GM12878 (cell line): ENCODE measurements at regions of chr6 and their contacts with region 1.

Region 1: GRCh38 chr6:111259089-111259831 is 172.0 kb downstream of the SLC16A10 start:
- DNase-seq: peak; percentile 99
- ATAC-seq: peak; percentile 97
- H3K4me3 ChIP-seq: peak overlapping the region; percentile 72
- H3K27ac ChIP-seq: peak overlapping the region; percentile 90
- H3K4me1 ChIP-seq: no peaks in the 10 kb centered on the region
- H3K27me3 ChIP-seq: no peaks in the 10 kb centered on the region
- CTCF ChIP-seq: peak; percentile 95 to 99 (median 97); a peak in 5 of 6 replicates
- EP300 ChIP-seq: peak in 1 of 2 experiments; percentile 88; a peak in 2 of 4 replicates
- POLR2A ChIP-seq: peak; percentile 95
- RAD21 ChIP-seq: peak; percentile 93

Region 2: GRCh38 chr6:111175109-111175508 is 84.2 kb before region 1 on chr6:
- CTCF ChIA-PET with region 1: no interaction called
- POLR2A ChIA-PET with region 1: no interaction called
- RAD21 ChIA-PET with region 1: no interaction called
- SMC1A ChIA-PET with region 1: no interaction called
- in situ Hi-C with region 1: no loop called
- intact Hi-C with region 1: no loop called
- DNase-seq: no peak
- ATAC-seq: no peak
- H3K4me3 ChIP-seq: no peak overlapping the region
- H3K27ac ChIP-seq: no peak overlapping the region
- H3K4me1 ChIP-seq: peaks cover 23% of the 10 kb centered on the region
- H3K27me3 ChIP-seq: no peaks in the 10 kb centered on the region
- CTCF ChIP-seq: no peak
- EP300 ChIP-seq: no peak
- POLR2A ChIP-seq: no peak
- RAD21 ChIP-seq: no peak

Region 3: DNA sequence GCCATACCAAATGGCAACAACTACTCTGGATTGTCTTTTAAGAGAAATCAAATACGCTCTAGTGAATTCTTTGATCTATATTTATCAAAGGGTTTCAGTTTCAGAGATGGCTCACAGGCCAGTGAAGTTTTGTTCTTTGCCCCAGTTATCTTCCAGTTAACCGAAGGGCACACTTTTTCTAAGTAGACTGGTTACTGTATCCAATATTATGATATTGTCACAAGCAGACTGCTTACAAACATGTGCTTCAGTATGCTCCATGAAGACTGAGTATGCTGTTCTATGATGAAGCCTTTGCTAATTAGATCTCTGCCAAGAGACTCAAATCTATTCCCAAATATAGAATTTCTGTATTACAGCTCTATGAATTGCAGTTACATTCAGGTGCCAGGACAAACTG is 42.7 kb after region 1 on chr6:
- CTCF ChIA-PET with region 1: interaction called, 9 read pairs
- POLR2A ChIA-PET with region 1: interaction called, 3 read pairs
- RAD21 ChIA-PET with region 1: interaction called, 11 read pairs
- SMC1A ChIA-PET with region 1: interaction called, 13 read pairs
- in situ Hi-C with region 1: no loop called
- intact Hi-C with region 1: loop called (anchors 2 kb)
- DNase-seq: no peak
- ATAC-seq: peak; percentile 86
- H3K4me3 ChIP-seq: no peak overlapping the region
- H3K27ac ChIP-seq: peak overlapping the region; percentile 35; the same call in 1 of the 2 replicates
- H3K4me1 ChIP-seq: peaks cover 15% of the 10 kb centered on the region
- H3K27me3 ChIP-seq: no peaks in the 10 kb centered on the region
- CTCF ChIP-seq: no peak
- EP300 ChIP-seq: no peak
- POLR2A ChIP-seq: no peak
- RAD21 ChIP-seq: no peak

Region 4: GRCh38 chr6:111382476-111383300 is 123.4 kb after region 1 on chr6:
- CTCF ChIA-PET with region 1: interaction called, 14 read pairs
- POLR2A ChIA-PET with region 1: interaction called, 3 read pairs
- RAD21 ChIA-PET with region 1: interaction called, 16 read pairs
- SMC1A ChIA-PET with region 1: interaction called, 3 read pairs
- in situ Hi-C with region 1: no loop called
- intact Hi-C with region 1: no loop called
- DNase-seq: no peak
- ATAC-seq: no peak
- H3K4me3 ChIP-seq: no peak overlapping the region
- H3K27ac ChIP-seq: no peak overlapping the region
- H3K4me1 ChIP-seq: 0 out of 2 replicates have a peak, but pooled peaks cover 3% of the 10 kb centered on the region
- H3K27me3 ChIP-seq: no peaks in the 10 kb centered on the region
- CTCF ChIP-seq: no peak
- EP300 ChIP-seq: no peak
- POLR2A ChIP-seq: no peak
- RAD21 ChIP-seq: no peak

Region 5: GRCh38 chr6:111432511-111432910 is 173.3 kb after region 1 on chr6:
- CTCF ChIA-PET with region 1: no interaction called
- POLR2A ChIA-PET with region 1: no interaction called
- RAD21 ChIA-PET with region 1: no interaction called
- SMC1A ChIA-PET with region 1: no interaction called
- in situ Hi-C with region 1: no loop called
- intact Hi-C with region 1: no loop called
- DNase-seq: no peak
- ATAC-seq: no peak
- H3K4me3 ChIP-seq: no peak overlapping the region
- H3K27ac ChIP-seq: no peak overlapping the region
- H3K4me1 ChIP-seq: peaks cover 13% of the 10 kb centered on the region
- H3K27me3 ChIP-seq: no peaks in the 10 kb centered on the region
- CTCF ChIP-seq: no peak
- EP300 ChIP-seq: no peak
- POLR2A ChIP-seq: no peak
- RAD21 ChIP-seq: no peak

Region 6: DNA sequence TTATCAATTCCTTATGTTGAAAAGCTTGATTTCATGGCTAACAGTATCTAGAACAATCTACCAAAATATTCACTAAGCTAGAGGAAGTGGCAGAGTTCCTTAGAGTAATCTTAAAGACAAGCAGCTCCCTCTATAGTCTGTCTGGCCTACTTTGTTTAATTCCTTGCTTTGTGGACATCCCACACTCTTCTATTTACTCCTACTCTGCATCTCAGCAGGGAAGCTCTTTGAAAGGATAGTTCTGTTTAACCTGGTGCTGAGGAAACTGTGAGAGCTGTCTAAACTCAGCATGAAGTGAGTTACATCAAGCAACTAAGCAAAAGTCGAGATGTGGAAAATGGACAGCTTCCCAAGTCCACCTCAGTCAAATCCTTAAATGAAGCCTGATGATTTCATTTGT is 219.5 kb after region 1 on chr6:
- CTCF ChIA-PET with region 1: interaction called, 215 read pairs
- POLR2A ChIA-PET with region 1: interaction called, 52 read pairs
- RAD21 ChIA-PET with region 1: interaction called, 263 read pairs
- SMC1A ChIA-PET with region 1: interaction called, 153 read pairs
- in situ Hi-C with region 1: loop called (anchors 5 kb)
- intact Hi-C with region 1: loop called (anchors 1 kb)
- DNase-seq: peak; percentile 49
- ATAC-seq: peak; percentile 60
- H3K4me3 ChIP-seq: 0 out of 2 replicates have a peak overlapping the region, but pooled peaks have one; percentile 0
- H3K27ac ChIP-seq: peak overlapping the region; percentile 5
- H3K4me1 ChIP-seq: peaks cover 12% of the 10 kb centered on the region; the same call in 1 of the 2 replicates
- H3K27me3 ChIP-seq: no peaks in the 10 kb centered on the region
- CTCF ChIP-seq: peak; percentile 33 to 71 (median 63); a peak in 4 of 6 replicates
- EP300 ChIP-seq: no peak
- POLR2A ChIP-seq: no peak
- RAD21 ChIP-seq: peak; percentile 70

Region 7: GRCh38 chr6:111573131-111573883 is 314.0 kb after region 1 on chr6:
- CTCF ChIA-PET with region 1: interaction called, 11 read pairs
- POLR2A ChIA-PET with region 1: no interaction called
- RAD21 ChIA-PET with region 1: interaction called, 5 read pairs
- SMC1A ChIA-PET with region 1: interaction called, 8 read pairs
- in situ Hi-C with region 1: no loop called
- intact Hi-C with region 1: no loop called
- DNase-seq: no peak
- ATAC-seq: no peak
- H3K4me3 ChIP-seq: no peak overlapping the region
- H3K27ac ChIP-seq: no peak overlapping the region
- H3K4me1 ChIP-seq: no peaks in the 10 kb centered on the region
- H3K27me3 ChIP-seq: no peaks in the 10 kb centered on the region
- CTCF ChIP-seq: no peak
- EP300 ChIP-seq: no peak
- POLR2A ChIP-seq: no peak
- RAD21 ChIP-seq: no peak

Region 8: GRCh38 chr6:111709615-111710398 is 450.5 kb after region 1 on chr6:
- CTCF ChIA-PET with region 1: interaction called, 7 read pairs
- POLR2A ChIA-PET with region 1: no interaction called
- RAD21 ChIA-PET with region 1: interaction called, 12 read pairs
- SMC1A ChIA-PET with region 1: interaction called, 3 read pairs
- in situ Hi-C with region 1: no loop called
- intact Hi-C with region 1: no loop called
- DNase-seq: peak; percentile 33
- ATAC-seq: peak; percentile 97
- H3K4me3 ChIP-seq: no peak overlapping the region
- H3K27ac ChIP-seq: peak overlapping the region; percentile 13; the same call in 1 of the 2 replicates
- H3K4me1 ChIP-seq: peaks cover 5% of the 10 kb centered on the region; the same call in 1 of the 2 replicates
- H3K27me3 ChIP-seq: no peaks in the 10 kb centered on the region
- CTCF ChIP-seq: peak; percentile 45 to 76 (median 62); a peak in 4 of 6 replicates
- EP300 ChIP-seq: no peak
- POLR2A ChIP-seq: no peak
- RAD21 ChIP-seq: peak; percentile 91